Ascending aorta (tissue), 2 donors: ENCODE measurements at regions of chr17 and their contacts with region 1.

Region 1: GRCh38 chr17:27353461-27354050 is 59.6 kb downstream of the WSB1 start:
- DNase-seq: peak; percentile 74 to 96
- H3K4me3 ChIP-seq: peak overlapping the region; percentile 63 to 73
- H3K27ac ChIP-seq: peak overlapping the region; percentile 95 to 98
- H3K4me1 ChIP-seq: peaks cover 3 to 11% of the 10 kb centered on the region in 2 donors
- H3K27me3 ChIP-seq: no peaks in the 10 kb centered on the region
- CTCF ChIP-seq: peak; percentile 36 to 100 (median 72)

Region 2: GRCh38 chr17:27245230-27245696 is 108.3 kb before region 1 on chr17:
- intact Hi-C with region 1: loop called (anchors 2 kb)
- DNase-seq: peak; percentile 79 to 93
- H3K4me3 ChIP-seq: peak overlapping the region; percentile 52 to 56
- H3K27ac ChIP-seq: peak overlapping the region; percentile 90 to 94
- H3K4me1 ChIP-seq: peaks cover 4 to 37% of the 10 kb centered on the region in 2 donors
- H3K27me3 ChIP-seq: no peaks in the 10 kb centered on the region
- CTCF ChIP-seq: peak; percentile 61 to 76 (median 70)

Region 3: DNA sequence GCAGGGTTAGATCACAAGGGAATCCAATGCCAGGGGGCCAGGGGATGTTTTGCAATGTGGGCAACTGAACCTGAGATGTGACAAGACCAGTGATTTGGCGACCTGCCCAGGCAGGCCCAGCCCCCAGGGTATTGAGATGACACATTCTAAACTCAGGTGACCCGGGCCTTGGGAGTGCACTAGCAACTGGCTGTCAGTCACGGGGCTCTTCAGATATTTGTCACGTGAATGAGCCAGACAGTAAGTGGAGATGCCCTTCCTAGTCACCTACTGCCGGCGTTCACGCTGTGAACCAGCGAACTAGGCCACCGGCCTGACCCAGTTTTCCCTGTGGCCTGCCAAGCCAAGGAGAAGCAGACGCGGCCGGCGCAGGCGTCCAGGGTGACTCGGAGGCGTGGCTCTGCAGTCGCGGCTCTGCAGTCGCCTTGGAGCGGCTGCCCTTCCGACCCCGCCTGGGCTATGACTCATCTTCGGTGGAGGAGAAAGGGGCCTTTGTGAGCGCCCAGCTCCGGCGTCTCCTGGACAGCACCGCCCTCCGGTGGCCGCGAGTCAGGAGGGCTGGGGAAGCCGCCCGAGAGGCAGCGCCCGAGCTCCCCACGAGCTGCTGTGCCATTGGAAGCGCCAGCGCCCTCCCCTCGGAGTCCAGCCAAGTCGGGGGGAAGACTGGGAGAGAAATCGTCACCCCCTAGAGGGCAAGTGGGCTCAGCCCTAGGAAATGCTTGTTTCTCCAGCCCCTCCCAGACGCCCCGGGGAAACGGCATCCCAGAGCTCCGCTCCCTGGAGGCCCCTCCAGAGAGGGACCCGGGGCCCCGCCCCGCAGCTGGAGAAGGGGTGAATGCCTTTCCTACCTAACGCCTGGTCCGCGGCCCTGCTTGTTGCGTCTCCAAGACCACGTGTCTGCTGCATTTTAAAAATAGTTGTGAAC is 20.8 kb before region 1 on chr17:
- intact Hi-C with region 1: loop called (anchors 1 kb)
- DNase-seq: peak; percentile 95 to 99
- H3K4me3 ChIP-seq: peak overlapping the region; percentile 55 to 57
- H3K27ac ChIP-seq: peak overlapping the region; percentile 92 to 93
- H3K4me1 ChIP-seq: peaks cover 0 to 16% of the 10 kb centered on the region in 2 donors
- H3K27me3 ChIP-seq: no peaks in the 10 kb centered on the region
- CTCF ChIP-seq: peak; percentile 84 to 95 (median 87)

Region 4: DNA sequence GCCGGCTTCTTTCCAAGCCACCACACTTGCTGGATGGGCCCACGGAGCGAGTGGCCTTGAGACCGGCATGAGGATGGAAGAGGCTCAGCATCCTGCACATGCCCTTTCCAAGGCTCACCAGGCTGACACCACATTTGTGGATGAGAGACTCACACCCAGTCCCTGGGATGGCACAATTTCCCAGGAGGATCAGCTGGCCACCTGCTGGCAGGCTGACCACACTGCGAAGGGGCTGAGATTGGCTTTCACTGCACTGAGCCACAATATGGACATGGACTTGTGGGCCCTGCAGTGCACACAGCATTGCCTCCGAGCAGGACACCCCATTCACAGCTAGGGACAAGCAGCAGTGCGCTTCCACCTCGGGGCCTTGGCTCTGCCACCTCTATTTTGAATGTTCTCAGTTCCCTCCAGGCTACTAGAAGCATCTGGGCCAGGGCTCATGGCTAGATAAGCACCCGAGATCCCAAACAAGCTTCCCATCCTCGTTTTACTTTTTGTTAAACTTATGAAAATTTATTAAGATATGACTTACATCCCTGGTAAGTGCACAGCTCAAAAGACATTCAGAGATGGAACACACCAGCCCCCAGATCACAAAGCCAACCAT is 77.4 kb after region 1 on chr17:
- intact Hi-C with region 1: loop called (anchors 2 kb)
- DNase-seq: no peak
- H3K4me3 ChIP-seq: no peak overlapping the region
- H3K27ac ChIP-seq: no peak overlapping the region
- H3K4me1 ChIP-seq: no peaks in the 10 kb centered on the region
- H3K27me3 ChIP-seq: no peaks in the 10 kb centered on the region
- CTCF ChIP-seq: peak; percentile 18 to 49 (median 39)

Region 5: DNA sequence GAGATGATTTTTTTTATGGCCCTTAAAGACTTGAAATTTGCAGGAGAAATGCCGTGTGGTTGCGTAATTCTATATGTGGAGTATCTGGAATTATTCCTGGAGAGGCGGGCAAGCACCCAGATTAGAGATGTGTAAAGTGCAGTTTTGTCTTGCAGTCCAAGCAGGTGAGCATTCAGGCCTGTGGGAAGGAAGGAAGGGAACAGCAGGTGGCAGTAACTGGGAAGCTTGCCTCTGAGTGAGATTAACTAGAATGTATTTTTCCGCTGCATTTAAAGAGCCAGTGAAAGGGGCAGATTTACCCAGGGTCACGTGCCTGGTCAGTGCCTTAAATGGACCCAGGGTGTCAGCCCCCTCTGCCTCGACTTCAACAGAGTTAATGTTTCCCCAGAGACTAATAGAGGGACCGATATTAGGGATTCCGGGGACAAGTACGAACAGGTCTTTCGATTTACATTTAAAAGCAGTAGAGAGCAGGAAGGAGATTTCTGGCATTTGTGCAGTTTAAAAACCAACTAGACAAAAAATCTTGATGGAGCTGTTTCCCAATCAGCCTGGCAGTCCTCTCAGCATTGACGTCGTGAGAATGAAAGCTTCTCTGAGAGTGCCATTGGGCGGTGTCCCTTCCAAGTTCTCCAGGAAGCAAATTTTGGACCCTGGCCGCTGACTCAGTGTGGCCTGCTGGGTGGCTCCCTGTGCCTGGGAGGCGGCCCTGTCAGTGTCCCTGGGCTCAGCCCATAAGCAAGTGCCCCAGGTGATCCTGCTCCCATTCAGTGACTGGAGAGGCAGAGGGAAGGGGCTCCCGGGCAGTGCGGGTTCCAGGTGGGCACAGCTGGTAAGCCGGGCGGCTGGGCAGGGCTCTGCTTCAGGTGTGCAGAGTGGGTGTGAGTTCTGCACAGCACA is 140.9 kb after region 1 on chr17:
- intact Hi-C with region 1: loop called (anchors 1 kb)
- DNase-seq: peak; percentile 58 to 91
- H3K4me3 ChIP-seq: peak overlapping the region; percentile 16 to 47
- H3K27ac ChIP-seq: peak overlapping the region; percentile 65 to 69
- H3K4me1 ChIP-seq: peaks cover 0 to 12% of the 10 kb centered on the region in 2 donors
- H3K27me3 ChIP-seq: no peaks in the 10 kb centered on the region
- CTCF ChIP-seq: peak in 2 of 3 experiments; percentile 27 to 62